CD8-positive, alpha-beta T cell (primary cell): ENCODE measurements at regions of chr16 and their contacts with region 1.

Region 1: GRCh38 chr16:27401768-27402568 is at the start of gene IL21R:
- DNase-seq: peak; percentile 75 to 97 (median 92)
- ATAC-seq: peak; percentile 78
- H3K4me3 ChIP-seq: peak within 1 kb of the TSS; percentile 72 to 78
- H3K4me3 Mint-ChIP-seq: peak within 1 kb of the TSS; percentile 97
- H3K27ac ChIP-seq: peak within 1 kb of the TSS; percentile 85 to 86
- H3K27ac Mint-ChIP-seq: peak within 1 kb of the TSS; percentile 99
- H3K4me1 ChIP-seq: peaks cover 48% of the 10 kb centered on the region
- H3K4me1 Mint-ChIP-seq: peaks cover 69% of the 10 kb centered on the region
- H3K27me3 ChIP-seq: no peaks in the 10 kb centered on the region
- H3K27me3 Mint-ChIP-seq: no peaks in the 10 kb centered on the region
- CTCF ChIP-seq: no peak
- total RNA-seq, gene IL21R: 113 to 121 TPM

Region 2: GRCh38 chr16:27381974-27382855 is 19.8 kb before region 1 on chr16:
- CTCF ChIA-PET with region 1: interaction called, 6 read pairs
- POLR2A ChIA-PET with region 1: interaction called, 15 read pairs
- intact Hi-C with region 1: loop called (anchors 2 kb)
- DNase-seq: peak in 3 of 9 experiments; percentile 45 to 85 (median 58)
- ATAC-seq: peak; percentile 58
- H3K4me3 ChIP-seq: no peak overlapping the region
- H3K4me3 Mint-ChIP-seq: no peak overlapping the region
- H3K27ac ChIP-seq: peak overlapping the region in 1 of 2 experiments; percentile 73
- H3K27ac Mint-ChIP-seq: peak overlapping the region; percentile 12
- H3K4me1 ChIP-seq: peaks cover 20% of the 10 kb centered on the region
- H3K4me1 Mint-ChIP-seq: peaks cover 32% of the 10 kb centered on the region
- H3K27me3 ChIP-seq: no peaks in the 10 kb centered on the region
- H3K27me3 Mint-ChIP-seq: no peaks in the 10 kb centered on the region
- CTCF ChIP-seq: no peak

Region 3: DNA sequence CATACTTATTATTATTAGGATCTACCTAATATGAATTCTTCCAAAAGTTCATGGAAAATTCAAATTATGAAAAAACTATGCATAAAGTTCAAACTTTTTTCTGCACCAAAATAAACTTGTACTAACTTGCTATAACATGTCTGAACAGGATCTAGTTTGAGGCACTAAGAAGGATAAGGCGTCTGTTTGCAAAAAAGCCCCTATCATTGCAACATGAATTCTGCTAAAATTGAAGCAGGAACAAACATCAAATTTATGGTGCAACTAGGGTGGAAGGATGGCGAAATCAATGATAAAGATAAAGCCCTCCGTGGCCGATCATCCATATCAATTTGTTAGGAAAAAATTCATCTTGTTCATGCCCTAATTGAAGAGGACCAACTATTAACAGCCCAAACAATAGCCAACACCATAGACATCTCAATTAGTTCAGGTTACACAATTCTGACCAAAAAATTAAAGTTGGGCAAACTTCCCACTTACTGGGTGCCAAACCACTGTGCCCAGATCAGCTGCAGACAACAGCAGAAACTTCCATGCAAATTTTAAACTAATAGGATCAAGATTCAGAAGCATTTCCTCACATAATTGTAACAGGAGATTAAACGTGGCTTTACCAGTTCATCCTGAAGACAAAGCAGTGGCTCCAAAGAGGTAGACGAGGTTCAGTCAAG is 12.9 kb after region 1 on chr16:
- CTCF ChIA-PET with region 1: interaction called, 3 read pairs
- POLR2A ChIA-PET with region 1: interaction called, 5 read pairs
- intact Hi-C with region 1: loop called in 1 of 2 experiments (anchors 1 kb)
- DNase-seq: no peak
- ATAC-seq: no peak
- H3K4me3 ChIP-seq: no peak overlapping the region
- H3K4me3 Mint-ChIP-seq: no peak overlapping the region
- H3K27ac ChIP-seq: no peak overlapping the region
- H3K27ac Mint-ChIP-seq: peak overlapping the region; percentile 33
- H3K4me1 ChIP-seq: peaks cover 17% of the 10 kb centered on the region
- H3K4me1 Mint-ChIP-seq: peaks cover 69% of the 10 kb centered on the region
- H3K27me3 ChIP-seq: no peaks in the 10 kb centered on the region
- H3K27me3 Mint-ChIP-seq: no peaks in the 10 kb centered on the region
- CTCF ChIP-seq: no peak

Region 4: DNA sequence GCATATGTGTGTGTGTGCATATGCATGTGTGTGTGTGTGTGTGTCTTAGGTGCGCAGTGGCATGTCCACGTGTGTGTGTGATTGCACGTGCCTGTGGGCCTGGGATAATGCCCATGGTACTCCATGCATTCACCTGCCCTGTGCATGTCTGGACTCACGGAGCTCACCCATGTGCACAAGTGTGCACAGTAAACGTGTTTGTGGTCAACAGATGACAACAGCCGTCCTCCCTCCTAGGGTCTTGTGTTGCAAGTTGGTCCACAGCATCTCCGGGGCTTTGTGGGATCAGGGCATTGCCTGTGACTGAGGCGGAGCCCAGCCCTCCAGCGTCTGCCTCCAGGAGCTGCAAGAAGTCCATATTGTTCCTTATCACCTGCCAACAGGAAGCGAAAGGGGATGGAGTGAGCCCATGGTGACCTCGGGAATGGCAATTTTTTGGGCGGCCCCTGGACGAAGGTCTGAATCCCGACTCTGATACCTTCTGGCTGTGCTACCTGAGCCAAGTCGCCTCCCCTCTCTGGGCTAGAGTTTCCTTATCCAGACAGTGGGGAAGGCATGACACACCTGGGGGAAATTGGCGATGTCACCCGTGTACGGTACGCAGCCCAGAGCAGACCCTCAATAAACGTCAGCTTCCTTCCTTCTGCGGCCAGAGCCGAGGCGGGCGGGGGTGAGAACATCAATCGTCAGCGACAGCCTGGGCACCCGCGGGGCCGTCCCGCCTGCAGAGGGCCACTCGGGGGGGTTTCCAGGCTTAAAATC is 47.6 kb after region 1 on chr16:
- CTCF ChIA-PET with region 1: interaction called, 9 read pairs
- POLR2A ChIA-PET with region 1: interaction called, 76 read pairs
- intact Hi-C with region 1: loop called (anchors 1 to 2 kb)
- DNase-seq: peak; percentile 63 to 97 (median 80)
- ATAC-seq: peak; percentile 60
- H3K4me3 ChIP-seq: peak overlapping the region; percentile 17 to 26
- H3K4me3 Mint-ChIP-seq: peak overlapping the region; percentile 70
- H3K27ac ChIP-seq: peak overlapping the region; percentile 60 to 91
- H3K27ac Mint-ChIP-seq: peak overlapping the region; percentile 99
- H3K4me1 ChIP-seq: peaks cover 68% of the 10 kb centered on the region
- H3K4me1 Mint-ChIP-seq: peaks cover 87% of the 10 kb centered on the region
- H3K27me3 ChIP-seq: no peaks in the 10 kb centered on the region
- H3K27me3 Mint-ChIP-seq: no peaks in the 10 kb centered on the region
- CTCF ChIP-seq: no peak

Region 5: GRCh38 chr16:27867122-27868110 is 465.4 kb after region 1 on chr16:
- CTCF ChIA-PET with region 1: no interaction called
- POLR2A ChIA-PET with region 1: no interaction called
- intact Hi-C with region 1: no loop called
- DNase-seq: peak in 7 of 9 experiments; percentile 23 to 71 (median 49)
- ATAC-seq: peak; percentile 78
- H3K4me3 ChIP-seq: no peak overlapping the region
- H3K4me3 Mint-ChIP-seq: no peak overlapping the region
- H3K27ac ChIP-seq: no peak overlapping the region
- H3K27ac Mint-ChIP-seq: no peak overlapping the region
- H3K4me1 ChIP-seq: no peaks in the 10 kb centered on the region
- H3K4me1 Mint-ChIP-seq: peaks cover 4% of the 10 kb centered on the region
- H3K27me3 ChIP-seq: no peaks in the 10 kb centered on the region
- H3K27me3 Mint-ChIP-seq: peaks cover 5% of the 10 kb centered on the region
- CTCF ChIP-seq: peak; percentile 23